ENCODE measurements at regions of chrX and their contacts with region 1.

Region 1: DNA sequence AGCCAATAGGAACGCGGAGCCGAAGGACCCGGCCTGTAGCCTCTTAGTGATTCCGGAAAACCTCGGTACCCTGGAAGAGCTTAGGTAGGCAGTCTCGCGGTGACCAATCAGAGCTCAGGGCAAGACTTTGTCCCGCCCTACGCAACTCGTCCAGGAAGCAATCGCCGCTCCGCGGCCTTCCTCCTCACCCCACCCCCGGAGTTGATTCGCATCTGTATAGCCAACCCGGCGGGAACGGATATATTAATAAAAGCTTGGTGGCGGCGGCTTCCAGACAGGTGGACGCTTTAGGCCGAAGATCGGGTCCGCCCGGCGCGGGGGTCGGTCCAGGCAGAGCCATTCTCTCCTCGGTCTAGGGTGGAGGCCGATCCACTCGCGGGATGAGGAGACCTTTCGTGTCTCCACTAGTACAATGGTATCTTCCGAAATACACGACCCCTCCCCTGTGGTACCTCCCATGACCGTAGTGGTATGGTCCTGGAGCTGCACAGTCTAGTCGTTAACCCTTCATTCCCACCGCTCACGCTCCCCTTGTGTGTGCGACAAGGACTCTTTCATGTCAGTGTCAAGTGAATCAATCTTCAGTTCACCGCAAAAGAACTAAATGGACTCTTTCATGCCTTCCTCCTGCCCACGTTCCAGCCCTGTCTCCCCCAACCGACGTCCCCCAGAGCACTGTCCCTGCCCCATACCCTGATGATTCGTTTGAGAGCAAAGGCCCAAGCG is 24.2 kb upstream of the GLOD5 start:
- DNase-seq: peak; percentile 85 to 93 (median 93)
- H3K4me3 ChIP-seq: peak overlapping the region; percentile 69 to 73
- H3K4me3 Mint-ChIP-seq: peak overlapping the region; percentile 81 to 94 (median 90)
- H3K27ac ChIP-seq: peak overlapping the region; percentile 68
- H3K27ac Mint-ChIP-seq: peak overlapping the region; percentile 89 to 98 (median 96)
- H3K4me1 ChIP-seq: peaks cover 20% of the 10 kb centered on the region
- H3K4me1 Mint-ChIP-seq: peaks cover 9 to 27% (median 17%) of the 10 kb centered on the region in 4 donors
- H3K27me3 ChIP-seq: no peaks in the 10 kb centered on the region
- H3K27me3 Mint-ChIP-seq: no peaks in the 10 kb centered on the region

Region 2: GRCh38 chrX:48648336-48648751 is 89.0 kb before region 1 on chrX:
- CTCF ChIA-PET with region 1: interaction called, 9 read pairs
- POLR2A ChIA-PET with region 1: no interaction called
- intact Hi-C with region 1: loop called (anchors 2 kb)
- DNase-seq: peak; percentile 46 to 62 (median 47)
- H3K4me3 ChIP-seq: no peak overlapping the region
- H3K4me3 Mint-ChIP-seq: no peak overlapping the region
- H3K27ac ChIP-seq: no peak overlapping the region
- H3K27ac Mint-ChIP-seq: peak overlapping the region in 4 of 7 donors; percentile 55 to 89 (median 74)
- H3K4me1 ChIP-seq: no peaks in the 10 kb centered on the region
- H3K4me1 Mint-ChIP-seq: peaks cover 0 to 8% (median 4%) of the 10 kb centered on the region in 4 donors
- H3K27me3 ChIP-seq: no peaks in the 10 kb centered on the region
- H3K27me3 Mint-ChIP-seq: no peaks in the 10 kb centered on the region

Region 3: GRCh38 chrX:48683411-48683982 is 53.9 kb before region 1 on chrX and contains the start of gene WAS:
- CTCF ChIA-PET with region 1: no interaction called
- POLR2A ChIA-PET with region 1: interaction called, 34 read pairs
- intact Hi-C with region 1: loop called (anchors 1 kb)
- DNase-seq: peak; percentile 54 to 63 (median 58)
- H3K4me3 ChIP-seq: peak within 1 kb of the TSS; percentile 79 to 93
- H3K4me3 Mint-ChIP-seq: peak within 1 kb of the TSS; percentile 86 to 95 (median 93)
- H3K27ac ChIP-seq: peak within 1 kb of the TSS; percentile 69
- H3K27ac Mint-ChIP-seq: peak within 1 kb of the TSS; percentile 88 to 95 (median 93)
- H3K4me1 ChIP-seq: peaks cover 48% of the 10 kb centered on the region
- H3K4me1 Mint-ChIP-seq: peaks cover 32 to 66% (median 44%) of the 10 kb centered on the region in 4 donors
- H3K27me3 ChIP-seq: no peaks in the 10 kb centered on the region
- H3K27me3 Mint-ChIP-seq: no peaks in the 10 kb centered on the region
- total RNA-seq, gene WAS: 108 to 110 TPM

Region 4: GRCh38 chrX:48696301-48697181 is 40.8 kb before region 1 on chrX and contains the start of gene SUV39H1:
- CTCF ChIA-PET with region 1: no interaction called
- POLR2A ChIA-PET with region 1: interaction called, 40 read pairs
- intact Hi-C with region 1: loop called (anchors 1 kb)
- DNase-seq: peak; percentile 86 to 91 (median 89)
- H3K4me3 ChIP-seq: peak within 1 kb of the TSS; percentile 48 to 74
- H3K4me3 Mint-ChIP-seq: peak within 1 kb of the TSS; percentile 88 to 98 (median 90)
- H3K27ac ChIP-seq: peak within 1 kb of the TSS; percentile 78
- H3K27ac Mint-ChIP-seq: peak within 1 kb of the TSS; percentile 95 to 98 (median 97)
- H3K4me1 ChIP-seq: peaks cover 20% of the 10 kb centered on the region
- H3K4me1 Mint-ChIP-seq: peaks cover 9 to 28% (median 19%) of the 10 kb centered on the region in 4 donors
- H3K27me3 ChIP-seq: no peaks in the 10 kb centered on the region
- H3K27me3 Mint-ChIP-seq: no peaks in the 10 kb centered on the region
- total RNA-seq, gene SUV39H1: 8.7 to 10.2 TPM

Region 5: DNA sequence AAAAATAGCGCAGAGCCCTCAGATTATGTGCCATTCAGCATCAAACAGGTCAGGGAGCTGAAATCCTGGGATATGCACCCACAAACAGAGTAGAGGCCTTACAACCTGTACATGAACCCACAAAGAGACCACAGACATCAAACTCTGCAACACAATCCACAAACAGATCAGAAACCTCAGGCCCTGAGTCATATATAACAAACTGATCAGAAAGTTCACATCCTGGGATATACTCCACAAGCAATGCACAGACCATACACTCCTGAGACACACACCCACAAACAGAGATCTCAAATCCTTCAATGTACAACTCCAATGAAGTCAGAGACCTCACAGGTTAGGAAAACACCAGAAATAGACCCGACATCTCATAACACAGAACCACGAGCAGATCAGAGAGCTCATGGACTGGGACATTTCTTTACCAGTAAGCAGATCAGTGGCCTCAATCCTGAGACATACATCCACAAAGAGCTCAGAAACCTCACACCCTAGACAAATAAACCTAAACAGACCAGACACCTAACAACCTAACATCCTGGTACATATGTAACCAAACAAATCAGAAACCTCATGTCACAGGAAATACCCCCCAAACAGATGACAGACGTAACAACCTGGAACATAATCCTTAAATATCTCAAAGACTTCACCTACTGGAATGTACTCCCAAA is 16.7 kb before region 1 on chrX:
- CTCF ChIA-PET with region 1: no interaction called
- POLR2A ChIA-PET with region 1: interaction called, 82 read pairs
- intact Hi-C with region 1: no loop called
- DNase-seq: peak in 3 of 5 donors; percentile 26 to 51 (median 38)
- H3K4me3 ChIP-seq: no peak overlapping the region
- H3K4me3 Mint-ChIP-seq: no peak overlapping the region
- H3K27ac ChIP-seq: no peak overlapping the region
- H3K27ac Mint-ChIP-seq: no peak overlapping the region
- H3K4me1 ChIP-seq: peaks cover 65% of the 10 kb centered on the region
- H3K4me1 Mint-ChIP-seq: peaks cover 27 to 34% (median 32%) of the 10 kb centered on the region in 4 donors
- H3K27me3 ChIP-seq: no peaks in the 10 kb centered on the region
- H3K27me3 Mint-ChIP-seq: no peaks in the 10 kb centered on the region

Region 6: GRCh38 chrX:48891402-48892288 is 154.3 kb after region 1 on chrX:
- CTCF ChIA-PET with region 1: no interaction called
- POLR2A ChIA-PET with region 1: interaction called, 12 read pairs
- intact Hi-C with region 1: no loop called
- DNase-seq: peak; percentile 76 to 85 (median 78)
- H3K4me3 ChIP-seq: peak overlapping the region in 1 of 2 donors; percentile 49
- H3K4me3 Mint-ChIP-seq: peak overlapping the region; percentile 75 to 97 (median 82)
- H3K27ac ChIP-seq: peak overlapping the region; percentile 52
- H3K27ac Mint-ChIP-seq: peak overlapping the region in 6 of 7 donors; percentile 37 to 90 (median 74)
- H3K4me1 ChIP-seq: peaks cover 15% of the 10 kb centered on the region
- H3K4me1 Mint-ChIP-seq: peaks cover 10 to 30% (median 21%) of the 10 kb centered on the region in 4 donors
- H3K27me3 ChIP-seq: no peaks in the 10 kb centered on the region
- H3K27me3 Mint-ChIP-seq: peaks cover 0 to 1% of the 10 kb centered on the region in 2 donors

Measured in CD4-positive, alpha-beta memory T cell (primary cell).